ENCODE measurements at regions of chr6 and their contacts with region 1.

Region 1: DNA sequence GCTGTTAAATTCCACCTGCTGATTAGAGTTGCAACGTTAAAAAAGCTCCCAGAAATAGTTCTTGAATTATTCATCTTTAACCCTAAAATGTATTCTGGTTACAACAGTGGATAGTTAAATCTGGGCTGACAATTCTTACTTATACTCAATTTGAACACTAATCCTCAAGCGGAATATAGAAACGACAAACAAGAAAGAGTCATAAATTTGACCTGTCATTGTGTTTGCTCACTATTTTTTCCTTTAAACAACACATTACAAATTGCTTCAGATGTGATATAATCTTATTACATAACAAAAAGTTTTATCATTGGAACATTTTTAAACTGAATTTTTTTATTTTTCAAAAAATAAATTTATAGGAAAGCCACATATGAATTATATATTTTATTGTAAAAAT is 104.5 kb upstream of the RNF217 start:
- DNase-seq: no peak
- H3K4me3 ChIP-seq: no peak overlapping the region
- H3K27ac ChIP-seq: no peak overlapping the region
- H3K27me3 ChIP-seq: no peaks in the 10 kb centered on the region
- CTCF ChIP-seq: no peak

Region 2: GRCh38 chr6:124190256-124190655 is 667.5 kb before region 1 on chr6:
- CTCF ChIA-PET with region 1: no interaction called
- POLR2A ChIA-PET with region 1: no interaction called
- DNase-seq: no peak
- H3K4me3 ChIP-seq: no peak overlapping the region
- H3K27ac ChIP-seq: no peak overlapping the region
- H3K27me3 ChIP-seq: no peaks in the 10 kb centered on the region
- CTCF ChIP-seq: no peak

Region 3: DNA sequence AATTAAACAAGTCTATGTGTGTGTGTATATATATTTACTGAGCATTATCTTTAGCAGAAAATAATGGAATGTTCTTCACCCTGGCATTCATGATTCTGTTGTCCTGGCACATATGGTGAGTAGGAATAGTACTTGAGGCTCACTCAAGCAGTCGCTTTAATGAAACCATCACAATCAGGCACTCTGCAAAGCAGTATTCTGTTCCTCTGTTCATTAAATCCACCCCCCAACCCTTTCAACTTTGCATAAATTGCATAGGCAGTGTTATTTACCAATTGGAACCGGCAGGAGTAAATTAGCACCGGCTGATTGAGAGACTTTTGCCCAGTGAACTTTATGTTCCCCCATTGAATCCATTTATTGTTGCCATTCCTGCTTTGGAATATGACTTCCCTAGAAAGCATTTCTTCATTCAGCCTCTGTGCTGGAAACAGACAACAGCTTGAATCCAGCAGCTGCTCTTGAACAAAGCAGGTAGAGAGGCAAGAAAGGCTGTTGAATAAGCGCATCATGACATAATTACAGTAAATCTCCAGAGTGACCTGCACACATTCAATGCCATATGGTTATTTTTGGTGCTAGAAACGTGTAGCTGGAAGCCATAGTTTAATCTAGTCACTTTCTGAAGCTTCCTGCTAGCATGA is 163.5 kb before region 1 on chr6:
- CTCF ChIA-PET with region 1: no interaction called
- POLR2A ChIA-PET with region 1: no interaction called
- DNase-seq: no peak
- H3K4me3 ChIP-seq: no peak overlapping the region
- H3K27ac ChIP-seq: no peak overlapping the region
- H3K27me3 ChIP-seq: no peaks in the 10 kb centered on the region
- CTCF ChIP-seq: no peak

Region 4: GRCh38 chr6:125182237-125183008 is 324.7 kb after region 1 on chr6:
- CTCF ChIA-PET with region 1: interaction called, 11 read pairs
- POLR2A ChIA-PET with region 1: no interaction called
- DNase-seq: no peak
- H3K4me3 ChIP-seq: no peak overlapping the region
- H3K27ac ChIP-seq: no peak overlapping the region
- H3K27me3 ChIP-seq: no peaks in the 10 kb centered on the region
- CTCF ChIP-seq: no peak

Region 5: DNA sequence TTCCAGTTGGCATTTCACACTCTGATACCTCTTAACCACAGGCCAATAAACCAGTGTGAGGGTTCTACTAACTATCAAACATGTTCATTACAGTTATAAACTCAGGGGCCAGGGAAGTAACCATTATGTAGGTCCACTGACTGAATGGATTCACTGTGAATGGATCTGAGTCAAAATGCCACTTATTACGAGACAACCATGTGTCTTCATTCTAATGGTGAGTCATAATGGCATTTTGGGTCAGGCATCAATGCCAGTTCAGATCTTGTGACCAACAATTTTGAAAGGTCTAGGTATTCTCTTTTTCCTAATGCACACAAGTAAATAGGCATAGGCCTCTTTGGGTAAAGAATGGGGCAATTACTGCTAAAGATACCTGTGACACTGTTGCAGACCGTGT is 779.5 kb after region 1 on chr6:
- CTCF ChIA-PET with region 1: no interaction called
- POLR2A ChIA-PET with region 1: no interaction called
- DNase-seq: no peak
- H3K4me3 ChIP-seq: no peak overlapping the region
- H3K27ac ChIP-seq: no peak overlapping the region
- H3K27me3 ChIP-seq: no peaks in the 10 kb centered on the region
- CTCF ChIP-seq: no peak